BJ (cell line): ENCODE measurements at regions of chr5 and their contacts with region 1.

Region 1: GRCh38 chr5:14351845-14352712 is 208.9 kb downstream of the TRIO start:
- DNase-seq: peak; percentile 9
- H3K4me3 ChIP-seq: no peak overlapping the region
- H3K27me3 ChIP-seq: no peaks in the 10 kb centered on the region
- CTCF ChIP-seq: peak; percentile 99

Region 2: DNA sequence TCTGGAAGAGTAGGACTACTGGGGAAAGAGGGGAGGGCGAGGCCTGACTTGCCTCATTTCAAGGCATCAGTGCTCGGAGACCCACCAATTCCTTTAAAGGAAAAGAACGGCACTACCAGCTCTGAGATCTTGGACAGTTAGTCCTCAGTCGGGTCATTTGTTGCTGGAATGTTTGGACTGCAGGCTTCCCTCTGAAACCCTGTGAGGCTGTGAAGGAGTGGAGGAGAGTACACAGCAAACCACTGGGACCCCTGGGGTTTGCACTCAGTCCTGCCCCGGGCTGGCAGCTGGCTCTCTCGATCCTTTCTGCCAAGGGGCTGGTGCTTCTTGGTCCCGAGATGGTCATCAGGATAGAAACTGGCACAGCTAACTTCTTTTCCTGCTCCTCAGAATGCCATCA is 14.5 kb before region 1 on chr5:
- CTCF ChIA-PET with region 1: interaction called, 11 read pairs
- POLR2A ChIA-PET with region 1: no interaction called
- DNase-seq: no peak
- H3K4me3 ChIP-seq: no peak overlapping the region
- H3K27me3 ChIP-seq: no peaks in the 10 kb centered on the region
- CTCF ChIP-seq: no peak

Region 3: DNA sequence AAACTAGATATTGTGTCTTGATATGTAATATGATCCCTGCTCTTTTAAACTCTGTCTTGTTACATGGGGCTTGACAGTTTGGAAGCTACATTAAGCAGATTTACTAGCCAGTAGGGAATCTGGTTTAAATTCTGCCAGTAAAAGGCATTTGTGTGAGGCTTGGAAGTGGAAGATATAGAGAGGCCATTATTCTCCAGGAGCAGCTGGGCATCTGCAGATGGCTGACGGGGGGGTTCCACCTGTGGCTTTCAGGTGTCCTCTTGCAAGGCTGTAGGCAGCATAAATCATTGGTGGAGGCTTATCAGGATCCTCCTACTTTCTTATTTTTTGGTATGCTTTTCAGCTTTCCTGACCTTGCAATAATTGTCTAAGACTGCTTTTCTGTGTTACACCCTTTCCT is 968.8 kb after region 1 on chr5:
- CTCF ChIA-PET with region 1: no interaction called
- POLR2A ChIA-PET with region 1: no interaction called
- DNase-seq: no peak
- H3K4me3 ChIP-seq: no peak overlapping the region
- H3K27me3 ChIP-seq: no peaks in the 10 kb centered on the region
- CTCF ChIP-seq: no peak